ENCODE measurements at regions of chr6 and their contacts with region 1.

Region 1: DNA sequence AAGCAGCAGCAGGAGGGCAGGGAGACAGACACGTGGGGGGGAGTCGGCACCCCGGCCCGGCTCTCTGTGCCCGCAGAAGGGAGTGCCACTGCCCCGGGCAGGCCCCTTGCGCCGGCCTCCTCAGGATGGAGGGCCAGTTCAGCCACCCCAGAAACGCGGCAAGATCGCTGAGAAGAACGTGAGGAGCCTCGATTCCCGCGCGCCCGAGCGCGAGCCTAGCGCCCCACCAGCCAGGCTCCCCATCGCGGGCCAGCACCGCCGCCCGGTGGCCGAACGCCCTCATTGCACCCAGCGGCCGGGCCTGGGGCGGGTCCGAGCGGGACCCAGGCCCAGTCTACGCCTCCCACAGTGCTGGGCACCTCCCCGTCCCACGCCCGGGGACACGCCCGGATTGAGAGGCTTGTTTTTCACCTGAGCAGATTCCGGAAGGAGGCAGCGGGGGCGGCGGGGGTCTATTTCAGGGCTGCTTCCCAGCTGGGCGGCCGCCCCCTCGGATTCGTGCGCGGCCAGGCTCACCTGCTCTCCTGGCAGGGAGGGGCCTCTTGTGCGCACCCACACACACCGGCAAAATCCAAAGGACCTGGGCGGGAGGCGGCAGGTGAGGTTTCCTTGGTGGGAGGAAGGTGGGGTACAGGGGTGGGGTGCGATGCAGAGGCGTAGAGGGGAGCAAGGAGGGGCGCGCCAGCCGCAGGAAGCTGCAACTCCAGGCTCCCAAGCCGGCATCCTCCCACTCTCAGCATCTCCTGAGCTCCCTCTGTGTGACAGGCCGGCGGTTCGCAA is 9.0 kb upstream of the GRM4 start:
- DNase-seq: peak; percentile 17
- H3K4me3 ChIP-seq: no peak overlapping the region
- H3K27ac ChIP-seq: no peak overlapping the region
- H3K4me1 ChIP-seq: no peaks in the 10 kb centered on the region
- H3K27me3 ChIP-seq: peaks cover 13 to 29% of the 10 kb centered on the region in 2 experiments
- CTCF ChIP-seq: peak; percentile 95
- POLR2A ChIP-seq: no peak

Region 2: GRCh38 chr6:33711140-33712129 is 443.4 kb before region 1 on chr6 and contains the start of gene UQCC2:
- CTCF ChIA-PET with region 1: interaction called, 14 read pairs
- POLR2A ChIA-PET with region 1: no interaction called
- dilution Hi-C with region 1: no loop called
- intact Hi-C with region 1: loop called (anchors 1 kb)
- DNase-seq: peak; percentile 97
- H3K4me3 ChIP-seq: peak within 1 kb of the TSS; percentile 74 to 92 (median 85)
- H3K27ac ChIP-seq: peak within 1 kb of the TSS; percentile 95
- H3K4me1 ChIP-seq: peaks cover 17% of the 10 kb centered on the region
- H3K27me3 ChIP-seq: no peaks in the 10 kb centered on the region
- CTCF ChIP-seq: peak; percentile 57 to 75
- POLR2A ChIP-seq: peak; percentile 97
- total RNA-seq, gene UQCC2: 91.5 and 95.3 TPM in 2 replicates

Region 3: GRCh38 chr6:33744001-33744848 is 410.6 kb before region 1 on chr6:
- CTCF ChIA-PET with region 1: interaction called, 63 read pairs
- POLR2A ChIA-PET with region 1: no interaction called
- dilution Hi-C with region 1: no loop called
- intact Hi-C with region 1: loop called (anchors 1 kb)
- DNase-seq: peak; percentile 72
- H3K4me3 ChIP-seq: no peak overlapping the region
- H3K27ac ChIP-seq: no peak overlapping the region
- H3K4me1 ChIP-seq: no peaks in the 10 kb centered on the region
- H3K27me3 ChIP-seq: peaks cover 4 to 9% of the 10 kb centered on the region in 2 experiments
- CTCF ChIP-seq: peak; percentile 90 to 93
- POLR2A ChIP-seq: no peak

Region 4: GRCh38 chr6:33851959-33852358 is 302.9 kb before region 1 on chr6:
- CTCF ChIA-PET with region 1: no interaction called
- POLR2A ChIA-PET with region 1: no interaction called
- dilution Hi-C with region 1: no loop called
- intact Hi-C with region 1: no loop called
- DNase-seq: no peak
- H3K4me3 ChIP-seq: no peak overlapping the region
- H3K27ac ChIP-seq: no peak overlapping the region
- H3K4me1 ChIP-seq: no peaks in the 10 kb centered on the region
- H3K27me3 ChIP-seq: peaks cover 8 to 13% of the 10 kb centered on the region in 2 experiments
- CTCF ChIP-seq: peak in 1 of 2 donors; percentile 33
- POLR2A ChIP-seq: no peak